ENCODE measurements at regions of chr17 and their contacts with region 1.

Region 1: GRCh38 chr17:2111719-2112118 is 56.8 kb downstream of the HIC1 start:
- DNase-seq: peak; percentile 72 to 92
- H3K4me3 ChIP-seq: no peak overlapping the region
- H3K27ac ChIP-seq: peak overlapping the region; percentile 18; the same call in 1 of the 2 replicates
- H3K4me1 ChIP-seq: peaks cover 20% of the 10 kb centered on the region
- H3K27me3 ChIP-seq: no peaks in the 10 kb centered on the region
- CTCF ChIP-seq: no peak

Region 2: DNA sequence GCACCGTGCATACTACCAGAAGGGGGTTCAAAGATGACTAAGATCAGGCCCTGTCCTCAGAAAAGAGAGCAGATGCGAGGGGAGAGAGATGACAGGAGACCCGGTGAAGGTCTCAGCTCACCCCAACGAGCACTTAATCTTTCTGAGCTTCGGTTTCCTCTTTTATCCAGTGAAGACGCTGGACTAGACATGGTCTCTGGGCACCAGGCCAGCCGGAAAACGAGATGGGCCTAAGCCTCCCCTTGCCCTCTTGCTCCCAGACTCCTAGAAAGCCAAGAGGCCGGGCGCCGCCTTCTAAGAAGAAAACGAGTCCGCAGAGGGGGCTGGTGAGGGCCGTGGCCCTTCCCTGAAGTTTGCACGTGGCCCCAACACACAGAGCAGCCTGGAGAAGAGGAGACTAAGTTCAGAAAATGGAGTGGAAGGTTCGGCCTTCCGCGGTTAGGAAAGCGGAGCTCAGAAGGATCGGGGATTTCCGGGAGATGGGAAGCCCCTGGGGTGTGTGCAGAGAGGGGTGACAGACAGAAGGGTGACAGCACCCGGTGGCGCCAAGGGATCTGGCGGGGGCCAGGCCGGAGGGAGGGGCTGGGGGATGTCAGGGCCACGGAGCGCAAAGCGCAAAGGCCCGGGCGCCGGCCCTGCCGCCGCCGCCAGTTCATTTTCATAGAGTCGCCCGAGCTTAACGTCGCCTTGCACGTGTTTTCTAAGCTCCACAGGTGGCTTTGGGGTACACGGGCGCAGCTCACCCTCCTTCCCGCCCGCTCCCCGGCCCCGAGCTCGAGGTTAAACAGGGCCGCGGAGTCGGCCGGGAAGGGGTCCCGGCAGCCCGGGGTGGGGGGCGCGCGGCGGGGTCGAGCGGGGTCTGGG is 883.6 kb before region 1 on chr17:
- CTCF ChIA-PET with region 1: no interaction called
- POLR2A ChIA-PET with region 1: interaction called, 24 read pairs
- intact Hi-C with region 1: no loop called
- DNase-seq: no peak
- H3K4me3 ChIP-seq: no peak overlapping the region
- H3K27ac ChIP-seq: no peak overlapping the region
- H3K4me1 ChIP-seq: no peaks in the 10 kb centered on the region
- H3K27me3 ChIP-seq: peaks cover 35% of the 10 kb centered on the region
- CTCF ChIP-seq: no peak

Region 3: DNA sequence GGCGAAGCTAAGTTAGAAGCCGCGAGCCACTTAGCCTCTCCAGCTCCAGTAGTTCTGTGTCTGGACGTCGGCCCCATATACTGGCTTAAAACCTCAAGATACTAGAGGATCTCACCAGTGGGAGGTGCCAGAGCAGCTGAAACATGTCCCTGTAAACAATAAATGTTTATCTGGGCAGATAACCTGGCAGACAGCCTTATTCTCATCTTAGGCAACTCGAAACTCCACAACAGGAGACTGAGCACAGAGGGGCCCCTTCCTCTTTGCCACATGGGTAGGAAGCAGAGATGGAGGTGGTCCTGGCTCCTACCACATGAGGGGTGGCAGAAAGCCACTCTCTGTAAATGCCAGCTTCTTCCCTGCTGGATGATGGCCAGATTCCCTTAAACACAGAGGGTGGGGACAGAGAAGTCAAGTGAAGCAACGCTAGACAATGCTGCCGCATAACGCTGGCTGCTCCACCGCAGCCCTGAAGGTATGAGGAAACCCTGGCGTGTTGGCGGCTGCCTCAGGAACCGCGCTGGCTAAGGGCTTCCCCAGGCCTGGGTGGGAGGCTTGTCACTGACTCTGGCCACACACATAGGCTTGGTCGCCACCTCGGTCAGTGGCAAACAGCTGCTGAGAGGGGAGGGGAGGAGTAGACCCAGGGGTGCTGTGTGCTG is 11.1 kb after region 1 on chr17:
- CTCF ChIA-PET with region 1: interaction called, 10 read pairs
- POLR2A ChIA-PET with region 1: interaction called, 6 read pairs
- intact Hi-C with region 1: no loop called
- DNase-seq: peak in 1 of 2 experiments; percentile 87
- H3K4me3 ChIP-seq: no peak overlapping the region
- H3K27ac ChIP-seq: no peak overlapping the region
- H3K4me1 ChIP-seq: no peaks in the 10 kb centered on the region
- H3K27me3 ChIP-seq: no peaks in the 10 kb centered on the region
- CTCF ChIP-seq: no peak

Region 4: GRCh38 chr17:2214047-2214928 is 102.6 kb after region 1 on chr17:
- CTCF ChIA-PET with region 1: interaction called, 10 read pairs
- POLR2A ChIA-PET with region 1: no interaction called
- intact Hi-C with region 1: no loop called
- DNase-seq: no peak
- H3K4me3 ChIP-seq: no peak overlapping the region
- H3K27ac ChIP-seq: no peak overlapping the region
- H3K4me1 ChIP-seq: peaks cover 21% of the 10 kb centered on the region
- H3K27me3 ChIP-seq: no peaks in the 10 kb centered on the region
- CTCF ChIP-seq: no peak

Measured in PC-9 (cell line).